ENCODE measurements at regions of chr1 and their contacts with region 1.

Region 1: DNA sequence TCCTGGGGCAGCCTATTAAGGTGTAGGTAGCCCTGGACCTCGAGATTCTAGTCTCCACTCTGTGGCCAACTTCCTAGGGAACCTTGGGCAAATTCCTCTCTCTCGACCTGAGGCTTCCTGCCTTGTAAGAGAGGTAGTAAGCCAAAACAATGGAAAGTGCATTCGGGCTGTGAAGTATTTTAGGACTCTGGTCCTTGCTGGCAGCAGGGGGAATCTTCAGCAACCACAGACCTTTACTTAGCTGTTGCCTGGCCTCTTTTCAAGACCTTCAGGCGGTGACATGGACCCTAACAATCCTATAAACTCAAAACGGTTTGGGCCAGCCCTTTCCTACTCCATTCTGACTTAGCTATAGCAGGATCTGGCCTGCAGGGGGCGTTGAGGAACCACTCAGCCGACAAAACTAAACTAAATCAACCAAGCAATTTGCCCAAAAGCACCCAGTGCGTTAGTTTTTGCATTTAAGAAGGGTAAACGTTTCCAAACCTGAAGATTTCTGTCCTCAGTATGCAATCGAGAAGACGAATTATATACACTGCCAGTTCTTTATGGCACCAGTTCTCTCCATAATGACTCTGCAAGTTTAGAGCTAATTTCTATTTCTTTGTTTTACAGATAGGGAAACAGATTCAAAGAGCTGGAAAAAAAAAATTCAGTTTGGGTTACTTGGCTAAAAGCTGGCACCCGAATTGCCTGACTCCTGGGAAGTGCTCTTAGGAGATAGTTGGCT is 10.9 kb upstream of the SESN2 start:
- DNase-seq: peak; percentile 53 to 94 (median 85)

Region 2: GRCh38 chr1:28329395-28330153 is 81.1 kb after region 1 on chr1:
- intact Hi-C with region 1: loop called (anchors 5 kb)
- DNase-seq: peak in 23 of 42 donors; percentile 2 to 45 (median 15)

Region 3: DNA sequence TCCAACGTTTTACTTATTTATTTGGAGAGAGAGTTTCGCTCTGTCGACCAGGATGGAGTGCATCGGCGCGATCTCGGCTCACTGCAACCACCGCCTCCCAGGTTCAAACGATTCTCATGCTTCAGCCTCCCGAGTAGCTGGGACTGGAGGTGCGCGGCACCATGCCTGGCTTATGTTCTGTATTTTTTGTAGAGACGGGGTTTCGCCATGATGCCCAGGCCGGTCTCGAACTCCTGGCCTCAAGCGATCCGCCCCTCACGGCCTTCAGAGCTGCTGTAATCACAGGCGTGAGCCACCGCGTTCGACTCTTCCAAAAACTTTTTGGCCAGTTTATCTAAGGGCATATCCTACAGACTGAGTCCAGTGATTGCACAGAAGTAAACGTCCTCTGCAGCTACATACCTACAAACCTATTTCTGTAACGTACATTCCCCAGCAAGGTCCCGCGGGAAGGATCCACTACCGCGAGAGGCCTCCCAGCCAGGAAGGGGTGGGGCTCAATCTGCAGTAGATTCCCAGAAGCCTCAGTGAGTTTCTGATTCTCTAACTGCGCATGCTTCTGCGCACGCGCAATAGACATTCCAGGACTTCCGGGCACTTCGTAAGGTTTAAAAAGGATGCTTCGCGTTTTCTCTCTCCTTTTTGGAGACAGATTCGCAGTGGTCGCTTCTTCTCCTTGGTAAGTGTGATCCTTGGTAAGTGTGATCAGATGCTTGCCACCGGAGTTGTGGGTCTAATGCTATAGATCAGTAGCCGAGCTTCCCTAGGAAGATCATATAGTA is 257.1 kb after region 1 on chr1 and contains the start of gene RCC1:
- intact Hi-C with region 1: loop called (anchors 5 kb)
- DNase-seq: peak; percentile 88 to 97 (median 94)

Measured in head of caudate nucleus (tissue), 42 donors.